Dorsolateral prefrontal cortex (tissue), 120 donors: ENCODE measurements at regions of chr16 and their contacts with region 1.

Region 1: GRCh38 chr16:58733671-58734458 is at the start of gene GOT2:
- DNase-seq: peak; percentile 61 to 89 (median 78)
- H3K4me3 ChIP-seq: peak within 1 kb of the TSS; percentile 65 to 98 (median 90)
- H3K27ac ChIP-seq: peak within 1 kb of the TSS; percentile 8 to 96 (median 84)
- H3K27me3 ChIP-seq: no peaks in the 10 kb centered on the region
- CTCF ChIP-seq: peak; percentile 65 to 96 (median 90)
- total RNA-seq, gene GOT2: 73.7 to 189 (median 145) TPM

Region 2: DNA sequence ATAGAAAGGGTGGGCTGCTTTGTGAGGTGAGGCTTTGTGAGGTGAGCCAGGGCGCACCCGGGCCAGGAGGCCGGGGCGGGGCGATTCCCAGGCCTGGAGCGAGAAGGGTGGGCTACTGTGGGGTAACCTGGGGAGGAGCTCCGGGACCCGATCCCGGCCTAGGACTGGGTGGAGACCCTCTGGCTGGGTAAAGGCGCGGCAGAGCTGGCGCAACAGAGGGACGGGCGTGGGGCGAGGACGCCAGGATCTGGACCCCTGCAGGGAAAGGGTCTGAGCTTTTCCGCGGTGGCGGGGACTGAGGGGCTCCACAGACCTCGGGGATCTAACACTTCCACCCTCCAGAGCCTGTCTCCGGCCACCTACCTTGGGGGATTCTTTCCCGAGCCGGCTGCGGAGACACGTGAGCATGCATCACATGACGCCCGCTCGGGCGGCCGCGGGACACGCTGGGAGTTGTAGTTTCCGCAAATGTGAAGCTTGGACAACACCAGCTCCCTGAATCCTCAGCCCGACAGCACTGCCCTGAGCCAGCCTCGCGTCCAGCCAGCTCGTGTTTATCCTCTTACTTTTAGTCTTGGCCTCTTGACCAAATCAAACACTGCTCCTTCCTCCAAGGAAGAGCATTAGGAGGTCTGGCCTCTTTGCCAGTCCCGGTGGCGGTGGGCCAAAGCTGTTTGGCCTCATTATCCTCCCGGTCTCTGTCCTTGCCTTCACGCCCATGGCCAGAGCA is 49.3 kb before region 1 on chr16 and contains the start of gene SLC38A7:
- intact Hi-C with region 1: loop called (anchors 1 to 5 kb)
- DNase-seq: peak; percentile 88 to 95 (median 92)
- H3K4me3 ChIP-seq: peak within 1 kb of the TSS; percentile 57 to 100 (median 93)
- H3K27ac ChIP-seq: peak within 1 kb of the TSS in 57 of 59 donors; percentile 7 to 94 (median 79)
- H3K27me3 ChIP-seq: no peaks in the 10 kb centered on the region
- CTCF ChIP-seq: peak in 23 of 56 donors; percentile 14 to 48 (median 24)
- total RNA-seq, gene SLC38A7: 17.4 to 52.1 (median 28.9) TPM

Region 3: DNA sequence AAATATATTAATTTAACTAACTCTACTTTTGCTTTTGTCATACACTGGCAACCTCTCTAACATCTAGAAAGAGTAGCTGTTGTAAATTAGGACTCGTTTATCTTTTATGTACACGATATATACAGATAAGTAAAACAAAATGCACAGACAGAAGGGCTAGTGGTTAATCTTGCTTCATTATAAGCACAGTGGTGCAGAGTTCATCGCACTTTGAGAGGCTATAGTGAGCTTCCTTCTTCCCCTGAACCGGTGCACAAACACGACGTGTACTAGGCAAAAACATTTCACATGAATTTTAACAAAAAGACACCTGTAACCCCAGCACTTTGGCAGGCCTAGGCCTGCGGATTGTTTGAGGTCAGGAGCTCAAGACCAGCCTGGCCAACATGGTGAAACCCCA is 10.6 kb after region 1 on chr16:
- intact Hi-C with region 1: no loop called
- DNase-seq: no peak
- H3K4me3 ChIP-seq: no peak overlapping the region
- H3K27ac ChIP-seq: no peak overlapping the region
- H3K27me3 ChIP-seq: no peaks in the 10 kb centered on the region
- CTCF ChIP-seq: no peak